Activated CD4-positive, alpha-beta memory T cell treated with anti-CD3 and anti-CD28 coated beads for 36 hours (primary cell): ENCODE measurements at regions of chr21 and their contacts with region 1.

Region 1: DNA sequence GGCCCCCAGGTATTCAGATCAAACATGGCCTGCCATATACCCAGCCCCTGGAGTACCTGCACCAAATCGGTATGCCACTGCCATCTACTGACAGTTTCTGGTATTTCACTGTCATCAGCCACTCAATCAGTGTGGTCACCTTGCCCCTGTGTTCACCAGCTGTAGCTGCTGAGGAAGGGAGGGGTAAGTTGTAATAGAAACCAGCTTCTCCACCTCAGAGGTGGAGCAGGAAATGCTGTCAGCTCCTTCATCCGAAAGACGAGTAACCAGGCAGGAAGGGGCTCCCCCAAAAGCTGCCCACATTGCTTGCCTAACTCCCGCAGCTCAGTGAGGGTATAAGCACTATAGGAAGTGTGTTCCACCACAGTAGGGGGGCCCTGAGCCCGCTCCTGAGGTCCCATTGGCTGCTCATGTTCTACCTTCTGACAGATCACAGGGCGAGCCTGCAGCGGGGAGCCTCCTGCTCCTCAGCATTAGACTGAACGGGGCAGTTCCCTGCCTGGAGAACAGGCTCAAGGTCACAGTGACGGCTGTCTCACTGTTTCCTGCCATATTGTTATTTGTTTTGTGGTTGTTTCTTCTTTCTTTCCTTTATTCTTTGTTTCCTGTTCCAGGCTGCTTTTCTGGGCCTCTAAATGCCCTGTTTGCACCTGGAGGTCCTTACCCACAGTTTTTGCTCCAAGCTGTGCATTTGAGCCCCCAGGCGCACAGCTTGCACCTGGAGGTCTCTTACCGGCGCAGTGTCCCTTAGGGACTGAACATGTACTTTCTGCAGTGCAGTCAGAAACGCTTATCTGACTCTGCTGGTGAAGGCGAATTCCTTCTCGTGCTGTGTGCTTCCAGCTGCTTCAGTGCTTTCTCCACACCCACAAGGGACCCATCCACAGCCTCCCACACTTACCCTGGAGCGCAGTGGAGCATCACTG is 1638.3 kb downstream of the MRPL39 start:
- DNase-seq: peak; percentile 80
- H3K4me3 Mint-ChIP-seq: no peak overlapping the region
- H3K27ac Mint-ChIP-seq: no peak overlapping the region
- H3K4me1 Mint-ChIP-seq: peaks cover 9% of the 10 kb centered on the region
- H3K27me3 Mint-ChIP-seq: no peaks in the 10 kb centered on the region

Region 2: GRCh38 chr21:22791986-22792560 is 1176.9 kb before region 1 on chr21:
- CTCF ChIA-PET with region 1: no interaction called
- POLR2A ChIA-PET with region 1: no interaction called
- intact Hi-C with region 1: loop called (anchors 5 kb)
- DNase-seq: no peak
- H3K4me3 Mint-ChIP-seq: no peak overlapping the region
- H3K27ac Mint-ChIP-seq: no peak overlapping the region
- H3K4me1 Mint-ChIP-seq: no peaks in the 10 kb centered on the region
- H3K27me3 Mint-ChIP-seq: no peaks in the 10 kb centered on the region

Region 3: DNA sequence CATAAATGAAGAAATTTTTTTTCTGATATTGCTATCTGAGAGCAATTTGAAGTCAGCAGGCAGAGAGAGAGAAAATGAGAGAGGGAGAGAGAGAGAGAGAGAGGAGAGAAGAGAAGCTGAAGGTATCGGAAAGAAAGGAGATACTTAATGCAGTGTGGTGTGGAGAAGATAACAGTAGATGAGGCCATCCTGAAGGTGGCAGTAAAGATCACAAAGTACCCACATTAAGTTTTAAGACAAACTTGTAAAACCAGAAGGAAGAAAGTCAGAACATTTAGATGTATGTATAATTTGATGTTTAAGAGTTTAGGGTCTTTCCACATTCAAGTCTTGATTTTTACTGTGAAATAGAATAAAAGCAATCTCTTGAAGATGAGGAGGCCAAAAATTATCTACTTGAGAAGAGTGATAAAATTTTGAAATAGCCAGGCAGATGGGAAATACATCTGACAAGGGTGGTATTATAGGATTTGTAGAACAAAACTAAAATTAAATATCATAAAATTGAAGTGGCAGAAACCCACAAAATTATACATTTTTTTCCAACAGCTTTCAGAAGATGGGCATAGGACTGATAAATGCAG is 115.1 kb before region 1 on chr21:
- CTCF ChIA-PET with region 1: interaction called, 28 read pairs
- POLR2A ChIA-PET with region 1: no interaction called
- intact Hi-C with region 1: loop called (anchors 1 kb)
- DNase-seq: no peak
- H3K4me3 Mint-ChIP-seq: no peak overlapping the region
- H3K27ac Mint-ChIP-seq: no peak overlapping the region
- H3K4me1 Mint-ChIP-seq: no peaks in the 10 kb centered on the region
- H3K27me3 Mint-ChIP-seq: no peaks in the 10 kb centered on the region

Region 4: GRCh38 chr21:23936224-23936623 is 32.8 kb before region 1 on chr21:
- CTCF ChIA-PET with region 1: no interaction called
- POLR2A ChIA-PET with region 1: no interaction called
- intact Hi-C with region 1: loop called (anchors 1 kb)
- DNase-seq: no peak
- H3K4me3 Mint-ChIP-seq: no peak overlapping the region
- H3K27ac Mint-ChIP-seq: no peak overlapping the region
- H3K4me1 Mint-ChIP-seq: no peaks in the 10 kb centered on the region
- H3K27me3 Mint-ChIP-seq: no peaks in the 10 kb centered on the region

Region 5: DNA sequence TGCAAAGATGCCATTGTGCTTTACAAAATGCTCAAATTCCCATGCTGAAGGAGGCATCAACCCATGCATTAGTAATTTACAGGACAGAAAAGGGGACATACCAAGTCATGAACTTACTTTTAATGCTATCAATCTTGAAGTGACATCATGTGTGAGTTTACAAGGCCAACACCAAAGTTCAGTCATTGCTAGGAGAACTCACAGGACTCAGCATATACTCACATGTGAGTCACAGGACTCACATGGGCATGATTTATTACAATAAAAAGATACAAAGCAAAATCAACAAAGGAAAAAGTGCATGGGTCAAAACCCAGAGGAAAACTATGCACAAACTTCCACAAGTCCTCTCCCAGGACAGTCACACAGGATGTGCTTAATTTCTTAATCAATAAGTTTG is 17.7 kb before region 1 on chr21:
- CTCF ChIA-PET with region 1: no interaction called
- POLR2A ChIA-PET with region 1: no interaction called
- intact Hi-C with region 1: no loop called
- DNase-seq: no peak
- H3K4me3 Mint-ChIP-seq: no peak overlapping the region
- H3K27ac Mint-ChIP-seq: no peak overlapping the region
- H3K4me1 Mint-ChIP-seq: peaks cover 22% of the 10 kb centered on the region
- H3K27me3 Mint-ChIP-seq: no peaks in the 10 kb centered on the region

Region 6: DNA sequence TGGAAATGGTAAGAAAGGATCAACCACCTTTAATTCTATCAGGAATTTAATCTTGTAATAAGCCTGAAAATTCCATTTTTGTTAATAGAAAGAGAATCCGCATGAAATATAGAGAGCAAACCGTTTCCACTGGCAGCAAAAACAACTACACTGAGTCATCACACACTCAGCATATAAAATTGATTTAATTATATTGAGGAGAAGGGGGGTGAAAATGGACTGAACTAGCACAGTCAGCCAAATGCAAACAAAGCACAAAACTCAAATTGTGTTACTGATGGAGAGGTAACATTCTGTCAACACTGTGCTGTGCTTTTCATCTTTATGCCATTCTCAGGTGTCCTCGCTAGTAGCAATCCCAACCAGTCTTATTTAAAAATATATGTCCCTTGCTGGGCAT is 54.4 kb after region 1 on chr21:
- CTCF ChIA-PET with region 1: no interaction called
- POLR2A ChIA-PET with region 1: no interaction called
- intact Hi-C with region 1: no loop called
- DNase-seq: no peak
- H3K4me3 Mint-ChIP-seq: no peak overlapping the region
- H3K27ac Mint-ChIP-seq: no peak overlapping the region
- H3K4me1 Mint-ChIP-seq: no peaks in the 10 kb centered on the region
- H3K27me3 Mint-ChIP-seq: no peaks in the 10 kb centered on the region

Region 7: DNA sequence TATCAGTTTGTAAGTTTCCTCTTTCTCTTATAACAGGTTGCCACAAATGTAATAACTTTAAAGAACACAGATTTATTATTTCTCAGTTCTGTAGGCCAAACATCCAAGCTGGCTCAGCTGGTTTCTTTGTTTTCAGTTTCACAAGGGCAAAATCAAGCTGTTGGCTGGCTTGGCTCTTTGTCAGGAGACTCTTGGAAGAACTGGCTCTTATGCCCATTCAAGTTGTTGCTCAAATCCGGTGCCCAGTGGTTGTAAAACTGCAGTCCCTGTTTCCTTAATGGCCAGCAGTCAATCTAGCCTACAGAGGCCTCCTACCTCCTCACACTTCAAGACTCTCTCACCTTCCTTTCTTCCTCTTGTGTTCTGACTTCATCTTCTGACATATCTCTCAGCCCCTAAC is 467.3 kb after region 1 on chr21:
- CTCF ChIA-PET with region 1: no interaction called
- POLR2A ChIA-PET with region 1: no interaction called
- intact Hi-C with region 1: no loop called
- DNase-seq: no peak
- H3K4me3 Mint-ChIP-seq: no peak overlapping the region
- H3K27ac Mint-ChIP-seq: no peak overlapping the region
- H3K4me1 Mint-ChIP-seq: no peaks in the 10 kb centered on the region
- H3K27me3 Mint-ChIP-seq: no peaks in the 10 kb centered on the region